PC-3 (cell line): ENCODE measurements at regions of chr17 and their contacts with region 1.

Region 1: GRCh38 chr17:72592242-72592966 is 471.6 kb downstream of the SOX9 start:
- DNase-seq: peak; percentile 95
- ATAC-seq: peak; percentile 66
- H3K4me3 ChIP-seq: peak overlapping the region; percentile 95
- H3K27ac ChIP-seq: peak overlapping the region; percentile 91
- H3K4me1 ChIP-seq: peaks cover 22% of the 10 kb centered on the region
- H3K27me3 ChIP-seq: no peaks in the 10 kb centered on the region
- CTCF ChIP-seq: no peak

Region 2: DNA sequence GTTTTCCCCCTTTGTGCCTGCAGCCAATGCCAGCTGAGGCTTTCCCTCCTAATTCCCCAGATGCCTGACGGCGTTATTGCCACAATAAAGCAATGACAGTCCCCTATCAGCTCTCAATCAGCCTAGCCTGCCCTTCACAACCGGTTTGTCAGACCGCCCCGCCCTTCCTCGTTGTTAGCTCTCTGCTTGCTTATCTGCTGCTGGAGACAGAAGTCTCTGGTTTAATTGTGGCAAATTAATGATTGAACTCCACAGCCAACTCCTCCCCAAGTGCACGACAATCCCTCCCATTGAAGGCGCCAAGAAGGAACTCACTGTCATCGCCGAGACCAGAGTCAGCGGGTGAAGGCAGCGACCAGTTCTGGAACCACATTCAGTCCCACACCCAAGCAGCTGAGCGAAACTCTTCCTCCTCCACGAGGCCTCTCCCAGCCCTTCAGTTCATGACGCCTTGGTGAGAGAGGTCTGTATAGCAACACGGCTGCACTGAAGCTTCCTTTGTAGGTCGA is 25.7 kb after region 1 on chr17:
- CTCF ChIA-PET with region 1: no interaction called
- POLR2A ChIA-PET with region 1: no interaction called
- intact Hi-C with region 1: loop called (anchors 1 kb)
- DNase-seq: peak; percentile 76
- ATAC-seq: peak; percentile 19
- H3K4me3 ChIP-seq: peak overlapping the region; percentile 27; the same call in 1 of the 2 replicates
- H3K27ac ChIP-seq: peak overlapping the region; percentile 51
- H3K4me1 ChIP-seq: peaks cover 44% of the 10 kb centered on the region
- H3K27me3 ChIP-seq: no peaks in the 10 kb centered on the region
- CTCF ChIP-seq: no peak

Region 3: DNA sequence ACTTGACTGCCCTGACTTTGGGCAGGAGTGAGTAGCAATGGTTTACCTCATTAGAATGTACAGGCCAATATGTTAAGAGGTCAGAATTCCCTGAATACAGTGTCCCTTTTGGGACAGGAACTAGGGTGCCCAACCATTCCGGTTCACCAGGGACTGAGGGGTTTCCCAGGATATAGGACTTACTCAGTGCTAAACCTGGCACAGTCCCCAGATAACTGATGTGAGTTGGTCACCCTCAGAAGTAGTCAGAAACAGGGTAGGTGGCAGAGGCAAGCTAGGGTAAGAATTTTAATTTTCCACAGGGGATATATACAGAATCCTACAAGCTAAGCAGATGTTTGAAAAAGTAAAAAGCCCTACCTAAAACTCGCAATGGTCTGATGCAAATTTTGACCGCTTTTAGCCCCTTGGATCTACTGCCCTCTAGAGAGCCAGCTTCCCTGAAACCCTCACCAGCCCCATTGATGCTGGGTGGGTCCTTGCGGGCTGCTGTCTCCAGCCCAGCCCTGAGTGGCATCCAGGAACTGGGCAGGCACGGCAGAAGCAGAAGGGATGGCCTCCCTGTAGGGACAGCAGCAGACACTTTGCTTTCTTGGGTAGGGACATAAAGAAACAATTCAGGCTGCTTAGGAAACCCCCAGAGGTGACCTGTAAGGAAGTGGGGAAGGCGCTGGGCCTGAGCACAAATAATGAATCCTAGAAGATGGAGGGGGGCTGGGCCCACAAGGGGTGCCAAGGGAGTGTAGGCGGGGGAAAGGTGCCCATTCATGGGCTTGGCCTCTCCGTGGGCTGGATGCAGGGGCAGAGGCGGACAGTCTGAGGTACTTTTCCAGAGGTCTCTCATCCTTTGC is 65.3 kb after region 1 on chr17:
- CTCF ChIA-PET with region 1: no interaction called
- POLR2A ChIA-PET with region 1: no interaction called
- intact Hi-C with region 1: loop called (anchors 2 kb)
- DNase-seq: peak; percentile 84
- ATAC-seq: peak; percentile 46
- H3K4me3 ChIP-seq: no peak overlapping the region
- H3K27ac ChIP-seq: peak overlapping the region; percentile 76
- H3K4me1 ChIP-seq: peaks cover 44% of the 10 kb centered on the region
- H3K27me3 ChIP-seq: no peaks in the 10 kb centered on the region
- CTCF ChIP-seq: peak; percentile 47; the same call in 1 of the 2 replicates

Region 4: GRCh38 chr17:72715906-72716572 is 123.6 kb after region 1 on chr17:
- CTCF ChIA-PET with region 1: interaction called, 5 read pairs
- POLR2A ChIA-PET with region 1: interaction called, 9 read pairs
- intact Hi-C with region 1: loop called (anchors 1 kb)
- DNase-seq: peak; percentile 99
- ATAC-seq: peak; percentile 95
- H3K4me3 ChIP-seq: no peak overlapping the region
- H3K27ac ChIP-seq: peak overlapping the region; percentile 95
- H3K4me1 ChIP-seq: peaks cover 36% of the 10 kb centered on the region
- H3K27me3 ChIP-seq: no peaks in the 10 kb centered on the region
- CTCF ChIP-seq: no peak